ENCODE measurements at regions of chr14 and their contacts with region 1.

Region 1: DNA sequence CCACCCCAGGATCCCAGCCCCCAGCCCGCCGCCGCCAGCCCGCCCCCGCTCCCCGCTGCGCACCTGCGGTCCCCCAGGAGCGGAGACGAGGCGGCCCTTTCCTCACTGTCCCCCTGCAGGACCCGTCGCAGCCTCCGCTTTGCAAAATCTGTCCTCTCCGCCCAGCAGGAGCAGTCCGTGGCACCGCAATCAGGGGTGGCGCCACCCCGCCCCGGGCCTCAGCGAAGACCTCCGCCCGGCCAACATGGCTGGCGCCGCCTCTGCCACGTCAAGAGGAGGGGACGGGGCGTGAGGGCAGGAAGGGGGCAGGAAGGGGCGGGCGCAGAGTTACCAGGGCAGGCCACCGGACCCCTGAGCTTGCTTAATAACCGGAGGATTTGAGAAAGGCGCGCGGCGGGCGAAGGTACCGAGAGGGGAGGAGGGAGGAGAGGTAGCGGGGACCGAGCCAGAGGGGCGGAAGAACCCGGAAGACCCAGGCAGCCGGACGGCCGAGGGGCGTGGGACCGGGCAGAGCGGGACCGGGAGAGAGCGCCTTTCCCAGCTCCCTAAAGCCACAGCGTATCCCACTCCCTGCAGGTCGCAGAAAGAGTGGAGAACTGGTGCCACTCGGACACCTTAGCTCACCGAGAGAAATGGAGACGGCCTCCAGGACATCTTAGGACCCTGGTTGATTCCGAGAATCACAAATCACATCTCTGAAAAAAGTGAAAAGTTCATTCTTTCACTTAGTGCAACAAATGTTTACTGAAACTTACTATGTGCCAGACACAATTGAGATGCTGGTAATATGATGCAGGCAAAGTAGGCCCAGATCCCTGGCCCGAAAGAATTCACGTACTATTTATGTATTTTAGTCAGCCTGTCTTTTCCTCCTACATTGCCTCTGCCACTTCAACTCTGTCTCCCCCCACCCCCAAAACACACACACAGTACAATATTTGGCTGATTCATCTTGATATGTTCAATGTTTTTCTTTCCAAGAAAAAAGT is at the start of gene SEC23A:
- DNase-seq: peak; percentile 95
- H3K4me3 ChIP-seq: peak within 1 kb of the TSS; percentile 82 to 96 (median 94)
- H3K27ac ChIP-seq: peak within 1 kb of the TSS; percentile 98 to 99 (median 98)
- H3K4me1 ChIP-seq: peaks cover 0 to 46% (median 36%) of the 10 kb centered on the region in 4 donors
- H3K27me3 ChIP-seq: no peaks in the 10 kb centered on the region
- CTCF ChIP-seq: no peak
- EP300 ChIP-seq: no peak
- POLR2A ChIP-seq: peak; percentile 88
- total RNA-seq, gene SEC23A: 118 to 235 (median 176) TPM

Region 2: GRCh38 chr14:39368261-39368959 is 265.1 kb after region 1 on chr14:
- intact Hi-C with region 1: loop called (anchors 5 kb)
- DNase-seq: peak; percentile 74
- H3K4me3 ChIP-seq: no peak overlapping the region
- H3K27ac ChIP-seq: no peak overlapping the region
- H3K4me1 ChIP-seq: peaks cover 0 to 4% (median 0%) of the 10 kb centered on the region in 4 donors
- H3K27me3 ChIP-seq: no peaks in the 10 kb centered on the region
- CTCF ChIP-seq: peak in 3 of 4 experiments; percentile 28 to 42 (median 35)
- EP300 ChIP-seq: no peak
- POLR2A ChIP-seq: no peak

Region 3: DNA sequence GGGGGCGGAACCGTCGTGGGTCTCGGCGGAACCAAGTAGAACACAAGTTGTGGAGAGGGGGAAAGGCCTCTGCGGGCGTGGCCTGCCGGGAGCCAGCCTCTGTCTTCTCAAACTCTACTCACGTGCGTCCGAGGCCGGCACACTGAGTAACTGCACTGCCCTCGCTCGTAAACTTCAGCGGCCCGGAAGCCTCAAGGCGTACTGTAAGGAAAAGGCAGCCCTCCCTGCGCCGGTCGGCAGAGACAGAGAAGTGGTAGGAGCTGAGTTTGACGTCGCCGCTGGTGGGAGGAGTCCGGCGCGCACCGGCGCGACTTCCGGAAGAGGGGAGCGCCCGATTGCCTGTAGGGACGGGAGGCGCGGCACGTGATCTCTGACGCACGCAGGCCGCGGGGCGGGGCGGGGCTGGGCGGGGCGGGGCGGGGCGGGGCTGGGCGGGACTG is 328.9 kb after region 1 on chr14 and contains the start of gene FBXO33:
- intact Hi-C with region 1: loop called (anchors 5 kb)
- DNase-seq: peak; percentile 99
- H3K4me3 ChIP-seq: peak within 1 kb of the TSS; percentile 82 to 95 (median 90)
- H3K27ac ChIP-seq: peak within 1 kb of the TSS; percentile 92 to 95 (median 94)
- H3K4me1 ChIP-seq: peaks cover 0 to 39% (median 34%) of the 10 kb centered on the region in 4 donors
- H3K27me3 ChIP-seq: no peaks in the 10 kb centered on the region
- CTCF ChIP-seq: no peak
- EP300 ChIP-seq: no peak
- POLR2A ChIP-seq: peak; percentile 12 to 27
- total RNA-seq, gene FBXO33: 7.2 to 12.2 (median 10.7) TPM

Region 4: GRCh38 chr14:39548358-39548757 is 445.1 kb after region 1 on chr14:
- intact Hi-C with region 1: no loop called
- DNase-seq: no peak
- H3K4me3 ChIP-seq: no peak overlapping the region
- H3K27ac ChIP-seq: no peak overlapping the region
- H3K4me1 ChIP-seq: no peaks in the 10 kb centered on the region
- H3K27me3 ChIP-seq: no peaks in the 10 kb centered on the region
- CTCF ChIP-seq: no peak
- EP300 ChIP-seq: no peak
- POLR2A ChIP-seq: no peak